IMR-90 (cell line): ENCODE measurements at regions of chr2 and their contacts with region 1.

Region 1: GRCh38 chr2:39858677-39859076 is 79.6 kb upstream of the THUMPD2 start:
- DNase-seq: no peak
- ATAC-seq: no peak
- H3K4me3 ChIP-seq: no peak overlapping the region
- H3K27ac ChIP-seq: no peak overlapping the region
- H3K4me1 ChIP-seq: no peaks in the 10 kb centered on the region
- H3K27me3 ChIP-seq: peaks cover 2% of the 10 kb centered on the region; the same call in 1 of the 2 replicates
- CTCF ChIP-seq: no peak
- POLR2A ChIP-seq: no peak
- RAD21 ChIP-seq: no peak

Region 2: GRCh38 chr2:39893616-39894015 is 34.9 kb after region 1 on chr2:
- CTCF ChIA-PET with region 1: no interaction called
- POLR2A ChIA-PET with region 1: no interaction called
- dilution Hi-C with region 1: no loop called
- in situ Hi-C with region 1: no loop called
- intact Hi-C with region 1: loop called (anchors 2 kb)
- DNase-seq: no peak
- ATAC-seq: no peak
- H3K4me3 ChIP-seq: no peak overlapping the region
- H3K27ac ChIP-seq: no peak overlapping the region
- H3K4me1 ChIP-seq: no peaks in the 10 kb centered on the region
- H3K27me3 ChIP-seq: no peaks in the 10 kb centered on the region; the same call in 1 of the 2 replicates
- CTCF ChIP-seq: no peak
- POLR2A ChIP-seq: no peak
- RAD21 ChIP-seq: no peak

Region 3: GRCh38 chr2:40401896-40402295 is 543.2 kb after region 1 on chr2:
- CTCF ChIA-PET with region 1: no interaction called
- POLR2A ChIA-PET with region 1: no interaction called
- dilution Hi-C with region 1: no loop called
- in situ Hi-C with region 1: no loop called
- intact Hi-C with region 1: no loop called
- DNase-seq: peak; percentile 94
- ATAC-seq: peak; percentile 78
- H3K4me3 ChIP-seq: no peak overlapping the region
- H3K27ac ChIP-seq: no peak overlapping the region
- H3K4me1 ChIP-seq: peaks cover 9% of the 10 kb centered on the region
- H3K27me3 ChIP-seq: no peaks in the 10 kb centered on the region
- CTCF ChIP-seq: no peak
- POLR2A ChIP-seq: no peak
- RAD21 ChIP-seq: no peak